WTC11 (cell line): ENCODE measurements at regions of chr22 and their contacts with region 1.

Region 1: DNA sequence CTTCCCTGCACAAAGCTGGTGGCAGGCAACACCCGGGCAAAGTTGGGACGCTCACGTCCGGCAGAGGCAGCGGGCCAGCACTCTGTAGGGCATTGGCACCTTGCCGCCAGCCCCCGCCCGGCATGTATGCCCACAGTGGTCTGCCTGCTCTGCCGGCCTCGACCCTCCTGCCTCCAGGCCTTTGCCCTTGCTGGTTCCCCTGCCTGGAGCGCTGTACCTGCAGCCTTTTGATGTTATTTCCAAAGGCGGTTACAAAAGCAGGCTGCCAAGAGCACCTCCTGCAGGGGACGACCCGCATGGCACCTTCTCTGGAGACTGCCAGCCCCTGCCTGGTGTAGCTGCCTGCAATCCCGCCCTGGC is 56.5 kb upstream of the SHISAL1 start:
- DNase-seq: peak; percentile 77
- ATAC-seq: peak; percentile 87
- H3K4me3 Mint-ChIP-seq: no peak overlapping the region
- H3K27ac Mint-ChIP-seq: no peak overlapping the region
- H3K4me1 Mint-ChIP-seq: no peaks in the 10 kb centered on the region
- H3K27me3 Mint-ChIP-seq: no peaks in the 10 kb centered on the region
- CTCF ChIP-seq: peak; percentile 49

Region 2: GRCh38 chr22:44380756-44381470 is 11.6 kb after region 1 on chr22:
- CTCF ChIA-PET with region 1: interaction called, 20 read pairs
- POLR2A ChIA-PET with region 1: no interaction called
- DNase-seq: no peak
- ATAC-seq: no peak
- H3K4me3 Mint-ChIP-seq: no peak overlapping the region
- H3K27ac Mint-ChIP-seq: no peak overlapping the region
- H3K4me1 Mint-ChIP-seq: no peaks in the 10 kb centered on the region
- H3K27me3 Mint-ChIP-seq: peaks cover 2% of the 10 kb centered on the region; the same call in 1 of the 2 replicates
- CTCF ChIP-seq: no peak